Body of pancreas (tissue), 4 donors: ENCODE measurements at regions of chr1 and their contacts with region 1.

Region 1: DNA sequence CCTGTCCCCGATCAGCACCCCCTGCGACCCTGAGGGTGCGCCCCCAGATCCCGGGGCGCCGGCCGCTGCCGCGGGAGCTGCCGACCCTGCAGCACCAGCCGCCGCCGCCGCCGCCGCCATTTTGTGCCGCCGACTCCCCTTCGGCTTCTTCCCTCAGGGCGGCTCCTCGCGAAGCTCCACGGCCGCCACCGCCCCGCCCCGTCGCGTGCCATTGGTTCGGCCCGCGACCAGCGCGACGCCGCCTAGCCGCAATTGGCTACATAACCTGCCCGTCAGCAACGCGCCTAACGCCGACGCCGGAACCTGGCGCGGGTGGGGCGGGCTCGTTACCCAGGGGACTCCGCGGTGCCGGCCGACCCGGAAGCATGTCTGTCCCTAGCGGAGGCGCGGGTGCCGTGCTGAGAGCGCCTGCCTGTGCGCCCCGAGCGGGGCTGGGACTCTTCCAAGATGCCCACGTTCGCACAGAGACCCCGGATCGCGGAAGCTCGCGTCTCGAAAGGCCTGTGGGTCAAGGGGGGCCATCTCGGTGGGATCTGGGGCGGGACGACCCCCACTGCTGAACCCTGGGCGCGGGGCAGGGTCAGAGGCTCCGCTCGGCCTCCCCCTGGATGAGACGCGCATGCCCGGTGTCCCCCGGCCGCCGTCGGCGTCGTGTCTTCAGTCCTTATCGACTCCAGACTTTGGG is at the start of gene CCNL2:
- DNase-seq: peak; percentile 99
- ATAC-seq: peak; percentile 98
- H3K4me3 ChIP-seq: peak within 1 kb of the TSS; percentile 96 to 98
- H3K27ac ChIP-seq: peak within 1 kb of the TSS; percentile 39 to 85 (median 74)
- H3K4me1 ChIP-seq: peaks cover 34% of the 10 kb centered on the region
- H3K27me3 ChIP-seq: no peaks in the 10 kb centered on the region
- CTCF ChIP-seq: peak; percentile 56 to 90 (median 77)
- POLR2A ChIP-seq: peak in 2 of 3 donors; percentile 61 to 63
- total RNA-seq, gene CCNL2: 225 to 246 TPM

Region 2: DNA sequence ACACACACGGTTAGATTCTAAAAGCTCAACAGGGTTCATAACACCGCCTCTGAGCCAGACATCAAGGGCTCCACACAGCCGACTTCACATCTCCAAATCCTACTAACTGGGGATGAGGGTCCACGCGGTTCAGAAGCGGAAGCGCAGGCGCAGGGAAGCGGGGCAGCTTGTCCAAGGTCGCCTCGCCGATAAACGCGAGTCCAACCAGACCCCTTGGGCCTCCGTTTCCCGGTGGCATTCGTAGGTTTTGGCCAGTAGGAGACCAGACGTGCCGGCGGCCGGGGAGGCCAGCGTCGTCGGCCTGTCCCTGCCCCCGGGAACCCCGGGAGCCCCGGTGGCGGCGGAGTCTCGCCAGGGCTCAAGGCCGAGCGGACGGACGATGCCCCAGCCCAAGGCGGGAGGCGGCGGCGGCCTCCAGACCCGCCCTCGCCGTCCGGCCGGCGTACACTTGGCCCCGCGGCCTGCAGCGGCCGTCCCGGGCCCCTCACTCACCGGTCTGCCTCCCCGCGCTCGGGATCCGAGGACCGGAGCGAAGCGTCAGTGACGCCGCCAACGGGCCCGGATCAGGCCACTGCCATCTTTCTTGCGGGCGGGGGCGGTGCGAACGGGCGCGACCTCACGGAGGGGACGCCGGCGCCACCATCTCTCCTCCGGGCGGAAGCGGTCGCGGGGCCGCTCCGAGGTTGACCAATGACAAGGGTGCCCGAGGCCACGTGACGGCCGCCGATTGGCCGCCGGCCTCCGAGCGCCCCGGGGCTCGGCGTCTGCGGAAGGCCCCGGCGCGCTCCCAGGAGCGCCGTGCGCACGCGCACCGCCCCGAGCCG is 167.7 kb before region 1 on chr1 and contains the start of gene SDF4:
- intact Hi-C with region 1: no loop called
- DNase-seq: peak; percentile 97
- ATAC-seq: peak; percentile 97
- H3K4me3 ChIP-seq: peak within 1 kb of the TSS; percentile 67 to 97
- H3K27ac ChIP-seq: peak within 1 kb of the TSS; percentile 63 to 96 (median 82)
- H3K4me1 ChIP-seq: peaks cover 28% of the 10 kb centered on the region
- H3K27me3 ChIP-seq: peaks cover 0 to under 1% of the 10 kb centered on the region in 2 donors
- CTCF ChIP-seq: no peak
- POLR2A ChIP-seq: peak; percentile 53 to 74 (median 65)
- total RNA-seq, gene SDF4: 89.2 to 97.6 TPM

Region 3: GRCh38 chr1:1435106-1435903 is 36.0 kb after region 1 on chr1 and contains the start of gene VWA1:
- intact Hi-C with region 1: loop called (anchors 5 kb)
- DNase-seq: peak; percentile 67 to 82 (median 72)
- ATAC-seq: peak; percentile 53
- H3K4me3 ChIP-seq: peak within 1 kb of the TSS in 1 of 2 donors; percentile 28
- H3K27ac ChIP-seq: peak within 1 kb of the TSS; percentile 78 to 94 (median 93)
- H3K4me1 ChIP-seq: peaks cover 84% of the 10 kb centered on the region
- H3K27me3 ChIP-seq: no peaks in the 10 kb centered on the region
- CTCF ChIP-seq: peak in 1 of 7 experiments; percentile 11
- POLR2A ChIP-seq: peak in 2 of 3 donors; percentile 31 to 44
- total RNA-seq, gene VWA1: 47.1 to 55.5 TPM

Region 4: GRCh38 chr1:1489861-1490260 is 90.5 kb after region 1 on chr1:
- intact Hi-C with region 1: loop called (anchors 10 kb)
- DNase-seq: no peak
- ATAC-seq: no peak
- H3K4me3 ChIP-seq: no peak overlapping the region
- H3K27ac ChIP-seq: no peak overlapping the region
- H3K4me1 ChIP-seq: no peaks in the 10 kb centered on the region
- H3K27me3 ChIP-seq: no peaks in the 10 kb centered on the region
- CTCF ChIP-seq: no peak
- POLR2A ChIP-seq: no peak